ENCODE measurements at regions of chr17 and their contacts with region 1.

Region 1: DNA sequence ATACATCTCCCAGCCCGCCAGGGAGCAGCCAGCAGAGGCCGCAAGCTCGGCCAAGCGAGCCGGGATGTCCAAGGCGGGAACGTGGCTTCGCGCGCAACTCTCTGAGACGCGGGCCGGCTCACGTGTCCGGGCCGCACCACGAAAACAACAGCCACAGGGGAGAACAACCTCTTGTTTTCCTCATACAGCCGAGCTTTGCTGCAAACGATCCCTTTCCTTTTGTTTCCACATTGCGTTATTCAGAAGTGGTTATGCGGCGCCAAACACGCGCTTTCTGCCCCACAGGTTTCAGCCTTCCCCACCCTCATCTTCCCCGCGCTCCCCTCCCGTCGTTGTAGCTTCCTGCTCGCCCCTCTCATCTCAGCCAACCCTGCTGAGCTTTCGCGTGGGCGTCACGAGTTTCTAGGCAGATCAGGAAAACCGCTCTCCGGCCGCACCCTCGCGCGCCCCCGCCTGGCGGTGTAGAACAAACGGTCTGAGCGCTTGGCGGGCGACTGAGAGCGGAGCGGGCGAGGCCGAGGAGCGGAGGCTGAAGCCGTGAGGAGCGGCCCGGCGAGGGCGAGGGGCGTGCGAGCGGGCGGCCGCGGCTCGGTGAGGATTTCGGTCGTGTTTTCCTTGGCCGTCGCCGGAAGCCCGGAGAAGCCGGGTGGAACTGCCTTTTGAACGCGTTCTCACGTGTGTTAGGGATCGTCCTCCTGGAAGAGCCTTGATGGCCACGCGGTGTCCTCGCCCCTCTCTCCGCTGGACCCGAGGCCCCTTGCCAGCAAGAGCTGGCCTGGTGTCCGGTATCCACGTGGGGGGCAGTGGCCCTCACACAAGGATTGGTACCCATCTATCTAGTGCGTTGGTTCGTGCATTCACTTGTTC is 6.6 kb upstream of the SMARCD2 start:
- DNase-seq: peak; percentile 98
- ATAC-seq: peak; percentile 98
- H3K4me3 Mint-ChIP-seq: peak overlapping the region; percentile 64
- H3K27ac Mint-ChIP-seq: peak overlapping the region; percentile 95
- H3K4me1 Mint-ChIP-seq: peaks cover 16% of the 10 kb centered on the region
- H3K27me3 Mint-ChIP-seq: no peaks in the 10 kb centered on the region
- CTCF ChIP-seq: peak; percentile 84

Region 2: DNA sequence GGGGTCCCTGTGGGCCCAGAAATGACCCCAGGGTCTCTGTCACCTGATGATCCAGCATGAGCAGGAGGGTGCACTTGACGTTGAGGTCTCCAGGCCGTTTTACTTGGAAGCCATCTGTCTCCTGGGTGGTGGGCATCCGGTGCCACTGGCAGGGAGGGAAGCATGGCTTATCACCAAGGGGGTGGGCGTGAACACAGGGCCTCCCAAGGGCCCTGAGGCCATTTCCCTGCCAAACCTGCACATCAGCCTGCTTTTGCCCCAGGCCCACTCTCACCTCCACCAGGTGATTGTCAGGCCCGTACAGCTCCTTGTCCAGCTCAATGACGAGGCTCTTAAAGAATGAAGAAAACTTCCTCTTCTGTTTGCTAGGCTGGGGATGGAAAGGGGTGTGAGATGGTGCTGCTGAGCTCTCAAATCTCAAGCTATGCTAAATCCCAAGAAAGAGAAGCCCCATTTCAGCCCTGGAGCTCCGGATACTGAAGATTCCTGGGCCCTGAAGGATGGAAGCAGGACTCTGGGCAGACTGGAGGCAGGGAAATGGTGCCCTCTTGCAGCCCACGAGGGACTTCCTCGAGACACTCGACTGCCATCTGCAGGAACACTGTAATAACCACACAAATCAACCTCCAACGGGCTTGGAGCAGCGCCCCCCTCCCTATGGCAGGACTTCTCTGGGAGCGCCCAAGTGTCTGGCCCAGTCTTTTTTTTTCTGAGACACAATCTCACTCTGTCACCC is 14.5 kb before region 1 on chr17:
- CTCF ChIA-PET with region 1: interaction called, 15 read pairs
- POLR2A ChIA-PET with region 1: interaction called, 6 read pairs
- intact Hi-C with region 1: no loop called
- DNase-seq: peak; percentile 61
- ATAC-seq: peak; percentile 83
- H3K4me3 Mint-ChIP-seq: no peak overlapping the region
- H3K27ac Mint-ChIP-seq: peak overlapping the region; percentile 69
- H3K4me1 Mint-ChIP-seq: peaks cover 47% of the 10 kb centered on the region
- H3K27me3 Mint-ChIP-seq: no peaks in the 10 kb centered on the region
- CTCF ChIP-seq: peak; percentile 58

Region 3: GRCh38 chr17:63859257-63859656 is 10.2 kb after region 1 on chr17:
- CTCF ChIA-PET with region 1: interaction called, 38 read pairs
- POLR2A ChIA-PET with region 1: interaction called, 5 read pairs
- intact Hi-C with region 1: no loop called
- DNase-seq: no peak
- ATAC-seq: no peak
- H3K4me3 Mint-ChIP-seq: no peak overlapping the region
- H3K27ac Mint-ChIP-seq: no peak overlapping the region
- H3K4me1 Mint-ChIP-seq: no peaks in the 10 kb centered on the region
- H3K27me3 Mint-ChIP-seq: no peaks in the 10 kb centered on the region
- CTCF ChIP-seq: no peak

Measured in activated CD8-positive, alpha-beta T cell treated with anti-CD3 and anti-CD28 coated beads for 36 hours (primary cell).